Calu3 (cell line): ENCODE measurements at regions of chr6 and their contacts with region 1.

Region 1: GRCh38 chr6:128630182-128630581 is 109.8 kb upstream of the PTPRK start:
- DNase-seq: peak; percentile 27
- H3K4me3 Mint-ChIP-seq: no peak overlapping the region
- H3K27ac Mint-ChIP-seq: no peak overlapping the region
- H3K4me1 Mint-ChIP-seq: peaks cover 39% of the 10 kb centered on the region
- H3K27me3 Mint-ChIP-seq: no peaks in the 10 kb centered on the region
- CTCF ChIP-seq: no peak

Region 2: GRCh38 chr6:128569737-128570679 is 60.2 kb before region 1 on chr6:
- CTCF ChIA-PET with region 1: no interaction called
- intact Hi-C with region 1: loop called (anchors 2 kb)
- DNase-seq: peak; percentile 42
- H3K4me3 Mint-ChIP-seq: peak overlapping the region; percentile 19
- H3K27ac Mint-ChIP-seq: peak overlapping the region; percentile 42
- H3K4me1 Mint-ChIP-seq: peaks cover 27% of the 10 kb centered on the region
- H3K27me3 Mint-ChIP-seq: no peaks in the 10 kb centered on the region
- CTCF ChIP-seq: no peak

Region 3: GRCh38 chr6:128617285-128617684 is 12.9 kb before region 1 on chr6:
- CTCF ChIA-PET with region 1: no interaction called
- intact Hi-C with region 1: no loop called
- DNase-seq: no peak
- H3K4me3 Mint-ChIP-seq: no peak overlapping the region
- H3K27ac Mint-ChIP-seq: no peak overlapping the region
- H3K4me1 Mint-ChIP-seq: no peaks in the 10 kb centered on the region
- H3K27me3 Mint-ChIP-seq: no peaks in the 10 kb centered on the region
- CTCF ChIP-seq: no peak

Region 4: DNA sequence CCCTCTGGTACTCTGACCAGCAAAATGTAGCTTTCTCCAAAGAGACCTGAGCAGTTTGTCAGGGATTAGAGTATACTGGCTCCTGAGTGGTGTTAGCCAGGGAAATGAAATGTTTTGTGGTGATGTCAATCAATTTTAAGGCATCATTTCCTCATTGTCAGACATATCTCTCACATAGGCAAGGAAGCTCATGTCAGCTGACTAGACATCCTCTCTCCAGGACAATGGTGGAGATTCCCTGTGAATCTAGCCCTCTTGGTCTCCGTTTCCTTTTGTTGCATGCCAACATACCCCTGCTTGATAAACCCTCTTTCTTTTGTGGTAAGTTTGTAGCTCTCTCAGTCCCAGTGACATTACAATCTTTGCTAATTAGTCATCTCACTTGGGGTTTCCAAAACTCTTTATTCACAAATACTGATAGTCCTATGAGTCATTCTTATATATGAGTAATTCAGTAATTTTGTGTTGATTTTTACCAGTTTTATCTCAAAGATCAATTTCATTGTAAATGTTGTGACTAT is 25.9 kb after region 1 on chr6:
- CTCF ChIA-PET with region 1: interaction called, 11 read pairs
- intact Hi-C with region 1: no loop called
- DNase-seq: peak; percentile 33
- H3K4me3 Mint-ChIP-seq: no peak overlapping the region
- H3K27ac Mint-ChIP-seq: peak overlapping the region; percentile 93
- H3K4me1 Mint-ChIP-seq: peaks cover 50% of the 10 kb centered on the region
- H3K27me3 Mint-ChIP-seq: peaks cover 10% of the 10 kb centered on the region
- CTCF ChIP-seq: no peak